Activated CD8-positive, alpha-beta T cell treated with anti-CD3 and anti-CD28 coated beads for 36 hours (primary cell): ENCODE measurements at regions of chr10 and their contacts with region 1.

Region 1: DNA sequence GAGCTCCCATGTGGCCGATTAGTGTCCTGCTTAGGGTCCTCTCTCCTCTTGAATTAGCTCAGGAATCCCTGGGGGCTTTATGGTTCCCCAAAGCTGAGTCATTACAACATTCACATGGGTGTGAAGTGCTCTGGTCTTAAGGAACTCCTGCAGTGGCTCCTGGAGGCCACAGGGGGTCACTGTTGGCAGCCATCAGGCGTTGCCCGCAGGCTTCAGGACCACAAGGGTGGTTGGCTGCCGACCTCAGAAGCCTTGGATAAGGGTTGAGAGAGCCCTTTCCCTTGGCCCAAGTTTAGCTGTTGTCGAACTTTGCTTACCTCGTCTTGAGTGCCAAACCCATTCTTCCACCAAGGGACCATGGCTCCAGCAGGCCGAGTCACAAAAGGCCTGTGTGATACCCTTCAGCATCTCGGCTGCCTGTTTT is 61.7 kb downstream of the SH2D4B start:
- DNase-seq: peak; percentile 58
- ATAC-seq: peak; percentile 90
- H3K4me3 Mint-ChIP-seq: no peak overlapping the region
- H3K27ac Mint-ChIP-seq: no peak overlapping the region
- H3K4me1 Mint-ChIP-seq: no peaks in the 10 kb centered on the region
- H3K27me3 Mint-ChIP-seq: no peaks in the 10 kb centered on the region
- CTCF ChIP-seq: peak; percentile 63

Region 2: GRCh38 chr10:80588546-80588945 is 10.9 kb before region 1 on chr10:
- CTCF ChIA-PET with region 1: interaction called, 21 read pairs
- POLR2A ChIA-PET with region 1: interaction called, 3 read pairs
- intact Hi-C with region 1: no loop called
- DNase-seq: no peak
- ATAC-seq: no peak
- H3K4me3 Mint-ChIP-seq: no peak overlapping the region
- H3K27ac Mint-ChIP-seq: no peak overlapping the region
- H3K4me1 Mint-ChIP-seq: no peaks in the 10 kb centered on the region
- H3K27me3 Mint-ChIP-seq: no peaks in the 10 kb centered on the region
- CTCF ChIP-seq: no peak

Region 3: GRCh38 chr10:80619036-80619435 is 19.6 kb after region 1 on chr10:
- CTCF ChIA-PET with region 1: interaction called, 14 read pairs
- POLR2A ChIA-PET with region 1: no interaction called
- intact Hi-C with region 1: no loop called
- DNase-seq: no peak
- ATAC-seq: no peak
- H3K4me3 Mint-ChIP-seq: no peak overlapping the region
- H3K27ac Mint-ChIP-seq: no peak overlapping the region
- H3K4me1 Mint-ChIP-seq: no peaks in the 10 kb centered on the region
- H3K27me3 Mint-ChIP-seq: no peaks in the 10 kb centered on the region
- CTCF ChIP-seq: no peak